Left lung (tissue), 14 donors: ENCODE measurements at regions of chr12 and their contacts with region 1.

Region 1: GRCh38 chr12:81610955-81611889 is 147.9 kb downstream of the PPFIA2 start:
- DNase-seq: peak in 1 of 4 donors; percentile 33
- ATAC-seq: no peak
- H3K4me3 ChIP-seq: no peak overlapping the region
- H3K27ac ChIP-seq: no peak overlapping the region
- H3K4me1 ChIP-seq: no peaks in the 10 kb centered on the region
- H3K27me3 ChIP-seq: no peaks in the 10 kb centered on the region
- CTCF ChIP-seq: no peak

Region 2: GRCh38 chr12:81450920-81451739 is 160.1 kb before region 1 on chr12:
- intact Hi-C with region 1: loop called in 1 of 2 experiments (anchors 10 kb)
- DNase-seq: peak in 3 of 4 donors; percentile 25 to 61 (median 34)
- ATAC-seq: peak; percentile 91
- H3K4me3 ChIP-seq: no peak overlapping the region
- H3K27ac ChIP-seq: no peak overlapping the region
- H3K4me1 ChIP-seq: no peaks in the 10 kb centered on the region
- H3K27me3 ChIP-seq: no peaks in the 10 kb centered on the region
- CTCF ChIP-seq: peak; percentile 41 to 46

Region 3: GRCh38 chr12:81797100-81797499 is 185.9 kb after region 1 on chr12:
- intact Hi-C with region 1: no loop called
- DNase-seq: peak in 1 of 4 donors; percentile 4
- ATAC-seq: no peak
- H3K4me3 ChIP-seq: no peak overlapping the region
- H3K27ac ChIP-seq: no peak overlapping the region
- H3K4me1 ChIP-seq: no peaks in the 10 kb centered on the region
- H3K27me3 ChIP-seq: peaks cover 0 to 7% of the 10 kb centered on the region in 2 donors
- CTCF ChIP-seq: peak; percentile 9 to 15